Heart right ventricle (tissue), 16 donors: ENCODE measurements at regions of chr20 and their contacts with region 1.

Region 1: DNA sequence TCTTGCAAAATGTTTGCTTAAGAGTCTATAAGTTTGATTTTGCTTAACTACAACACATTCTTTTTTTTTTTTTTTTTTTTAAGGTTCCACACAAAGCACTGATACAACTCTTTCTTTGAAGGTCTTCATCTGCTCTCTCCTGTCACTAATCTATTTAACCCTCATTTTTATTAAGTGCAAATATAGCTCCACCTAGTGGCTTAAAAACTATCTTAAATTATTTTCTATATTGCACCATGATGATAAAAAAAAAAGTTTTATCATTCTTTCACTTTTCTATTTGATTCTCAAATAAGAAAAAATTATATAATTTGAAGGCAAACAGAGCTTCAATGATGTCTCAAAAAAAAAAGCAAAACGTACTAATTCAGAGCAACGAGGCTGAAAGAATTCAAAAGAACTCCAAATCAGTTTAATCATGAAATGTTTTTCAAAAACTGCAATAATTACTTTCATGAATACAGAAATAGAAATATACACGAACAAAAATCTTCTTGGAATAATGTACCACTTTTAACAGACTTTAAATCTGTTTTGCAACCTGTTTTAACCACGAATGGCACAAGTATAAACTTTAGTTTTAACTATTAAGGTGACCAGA is 12.8 kb downstream of the ESF1 start:
- DNase-seq: no peak
- ATAC-seq: no peak
- H3K4me3 ChIP-seq: no peak overlapping the region
- H3K27ac ChIP-seq: no peak overlapping the region
- H3K4me1 ChIP-seq: no peaks in the 10 kb centered on the region
- H3K27me3 ChIP-seq: no peaks in the 10 kb centered on the region
- CTCF ChIP-seq: peak; percentile 13 to 70 (median 58)

Region 2: DNA sequence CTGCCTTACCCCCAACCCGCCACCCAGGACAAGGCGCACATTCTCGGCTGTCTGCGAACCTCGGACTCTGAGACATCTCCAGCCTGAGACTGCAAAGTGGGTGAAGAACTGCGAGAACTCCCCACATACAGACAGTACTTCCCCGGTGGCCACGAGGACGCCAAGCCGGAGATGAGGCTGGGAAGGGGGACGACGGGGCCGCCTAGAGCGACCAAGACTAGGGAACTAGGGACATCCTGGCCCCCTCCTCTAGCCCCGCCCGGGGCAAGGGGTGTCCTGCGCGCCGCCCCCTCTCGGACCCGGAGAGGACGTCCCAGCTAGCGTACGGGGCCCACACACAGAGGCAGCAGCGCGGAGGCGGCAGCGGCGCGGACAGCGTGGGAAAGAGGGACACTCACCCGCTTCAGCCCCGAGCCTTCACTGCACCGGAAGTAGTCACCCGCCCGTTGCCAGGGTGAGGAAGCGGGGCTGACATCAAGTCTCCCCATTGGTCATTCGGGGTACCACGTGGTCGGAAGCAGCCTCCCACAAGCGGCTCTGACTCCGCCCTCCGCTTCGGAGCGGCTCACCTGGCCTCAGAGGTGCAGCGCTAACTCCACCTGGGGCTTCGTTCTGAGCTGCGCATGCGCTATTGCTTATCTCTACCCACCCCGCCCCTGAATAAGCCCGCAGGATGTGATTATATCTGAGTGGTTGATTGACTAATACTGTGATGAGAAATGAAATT is 133.3 kb before region 1 on chr20 and contains the start of gene TASP1:
- intact Hi-C with region 1: loop called in 1 of 10 experiments (anchors 10 kb)
- DNase-seq: peak; percentile 91 to 95
- ATAC-seq: peak; percentile 100
- H3K4me3 ChIP-seq: peak within 1 kb of the TSS; percentile 78 to 98 (median 93)
- H3K27ac ChIP-seq: peak within 1 kb of the TSS in 9 of 10 donors; percentile 34 to 89 (median 68)
- H3K4me1 ChIP-seq: peaks cover 0 to 15% (median 11%) of the 10 kb centered on the region in 9 donors
- H3K27me3 ChIP-seq: peaks cover 0 to 8% (median 0%) of the 10 kb centered on the region in 7 donors
- CTCF ChIP-seq: no peak
- total RNA-seq, gene TASP1: 4.6 to 8.5 (median 6.0) TPM

Region 3: DNA sequence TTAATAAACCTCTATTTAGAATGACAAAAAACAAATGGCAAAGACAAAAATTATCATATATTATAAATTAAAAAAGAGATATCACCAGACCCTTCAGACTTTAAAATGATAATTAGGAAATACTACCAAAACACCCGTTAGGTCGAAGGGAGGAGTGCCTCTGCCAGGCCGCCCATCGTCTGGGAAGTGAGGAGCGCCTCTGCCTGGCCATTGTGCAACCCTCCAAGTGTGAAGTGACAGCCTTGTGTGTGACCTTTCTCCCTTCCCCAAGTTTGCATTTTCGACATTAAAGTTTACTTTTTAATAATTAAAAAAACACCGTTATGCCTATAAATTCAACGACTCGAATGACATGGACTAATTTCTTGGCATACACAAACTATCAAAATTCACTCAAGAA is 68.7 kb before region 1 on chr20:
- intact Hi-C with region 1: no loop called
- DNase-seq: no peak
- ATAC-seq: no peak
- H3K4me3 ChIP-seq: no peak overlapping the region
- H3K27ac ChIP-seq: no peak overlapping the region
- H3K4me1 ChIP-seq: peaks cover 0 to 6% (median 0%) of the 10 kb centered on the region in 9 donors
- H3K27me3 ChIP-seq: no peaks in the 10 kb centered on the region
- CTCF ChIP-seq: no peak

Region 4: GRCh38 chr20:14445310-14445709 is 673.4 kb after region 1 on chr20:
- intact Hi-C with region 1: no loop called
- DNase-seq: no peak
- ATAC-seq: no peak
- H3K4me3 ChIP-seq: no peak overlapping the region
- H3K27ac ChIP-seq: no peak overlapping the region
- H3K4me1 ChIP-seq: no peaks in the 10 kb centered on the region
- H3K27me3 ChIP-seq: no peaks in the 10 kb centered on the region
- CTCF ChIP-seq: no peak